OCI-LY7 (cell line): ENCODE measurements at regions of chr21 and their contacts with region 1.

Region 1: GRCh38 chr21:34565238-34565637 is 49.7 kb downstream of the RCAN1 start:
- DNase-seq: no peak
- H3K4me3 ChIP-seq: no peak overlapping the region
- H3K27ac ChIP-seq: no peak overlapping the region
- H3K4me1 ChIP-seq: no peaks in the 10 kb centered on the region
- CTCF ChIP-seq: no peak

Region 2: DNA sequence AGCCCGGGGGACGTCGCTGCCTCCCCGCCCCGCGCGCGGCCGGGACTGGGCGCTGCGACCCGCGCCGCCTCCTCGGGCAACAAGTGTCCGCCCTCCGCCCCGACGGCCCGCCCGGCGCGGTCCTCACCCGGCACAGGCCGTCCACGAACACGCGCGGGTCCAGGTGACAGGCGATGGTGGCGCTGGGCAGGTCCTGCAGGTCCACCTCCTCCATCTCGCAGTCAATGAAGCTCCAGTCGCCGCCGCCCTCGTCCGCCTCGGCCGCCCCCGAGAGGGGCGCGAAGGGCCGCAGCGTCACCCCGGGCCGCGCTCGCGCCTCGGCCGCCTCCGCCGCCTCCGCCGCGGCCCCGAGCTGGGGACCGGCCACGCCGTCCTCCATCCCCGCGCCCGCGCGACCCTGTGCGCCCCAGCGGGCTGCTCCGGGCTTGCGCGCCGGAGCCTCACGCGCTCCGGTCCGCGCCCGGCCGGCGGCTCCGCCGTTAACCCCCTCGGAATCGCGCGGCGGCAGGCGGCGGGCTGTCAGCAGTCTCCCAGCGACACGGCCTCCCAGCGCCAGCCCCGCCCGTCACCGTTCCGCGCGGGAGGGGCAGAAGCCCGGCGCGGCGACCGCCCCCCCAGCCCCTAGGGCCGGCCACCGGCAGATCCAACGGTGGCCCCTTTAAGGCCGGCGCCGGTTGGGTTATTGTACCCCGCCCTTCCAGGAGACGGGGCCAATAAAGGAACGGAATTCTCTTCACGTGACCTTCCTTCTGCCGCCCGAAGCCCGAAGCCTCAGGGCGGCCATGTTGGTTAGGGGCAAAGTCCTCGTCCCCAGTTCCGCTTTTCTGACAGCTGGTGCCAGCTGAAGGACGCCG is 49.6 kb after region 1 on chr21 and contains the start of gene RCAN1:
- CTCF ChIA-PET with region 1: no interaction called
- POLR2A ChIA-PET with region 1: interaction called, 10 read pairs
- intact Hi-C with region 1: no loop called
- DNase-seq: peak; percentile 95
- H3K4me3 ChIP-seq: peak within 1 kb of the TSS; percentile 77
- H3K27ac ChIP-seq: no peak within 1 kb of the TSS
- H3K4me1 ChIP-seq: peaks cover 23% of the 10 kb centered on the region
- CTCF ChIP-seq: no peak
- total RNA-seq, gene RCAN1: 2.8 and 6.8 TPM in 2 replicates